ENCODE measurements at regions of chr16 and their contacts with region 1.

Region 1: GRCh38 chr16:28218104-28218503 is 6.3 kb upstream of the XPO6 start:
- DNase-seq: peak in 8 of 9 donors; percentile 41 to 82 (median 72)
- ATAC-seq: peak; percentile 99
- H3K4me3 ChIP-seq: no peak overlapping the region
- H3K4me3 Mint-ChIP-seq: no peak overlapping the region
- H3K27ac ChIP-seq: no peak overlapping the region
- H3K27ac Mint-ChIP-seq: peak overlapping the region in 8 of 9 donors; percentile 13 to 84 (median 66)
- H3K4me1 ChIP-seq: peaks cover 0 to 5% of the 10 kb centered on the region in 2 donors
- H3K4me1 Mint-ChIP-seq: peaks cover 0 to 9% (median 6%) of the 10 kb centered on the region in 7 donors
- H3K27me3 ChIP-seq: no peaks in the 10 kb centered on the region
- H3K27me3 Mint-ChIP-seq: no peaks in the 10 kb centered on the region

Region 2: GRCh38 chr16:28011971-28012445 is 206.1 kb before region 1 on chr16:
- CTCF ChIA-PET with region 1: no interaction called
- POLR2A ChIA-PET with region 1: no interaction called
- intact Hi-C with region 1: no loop called
- DNase-seq: no peak
- ATAC-seq: no peak
- H3K4me3 ChIP-seq: no peak overlapping the region
- H3K4me3 Mint-ChIP-seq: no peak overlapping the region
- H3K27ac ChIP-seq: no peak overlapping the region
- H3K27ac Mint-ChIP-seq: peak overlapping the region in 1 of 9 donors; percentile 18
- H3K4me1 ChIP-seq: no peaks in the 10 kb centered on the region
- H3K4me1 Mint-ChIP-seq: peaks cover 0 to 6% (median 0%) of the 10 kb centered on the region in 7 donors
- H3K27me3 ChIP-seq: no peaks in the 10 kb centered on the region
- H3K27me3 Mint-ChIP-seq: peaks cover 4 to 27% (median 17%) of the 10 kb centered on the region in 5 donors

Region 3: DNA sequence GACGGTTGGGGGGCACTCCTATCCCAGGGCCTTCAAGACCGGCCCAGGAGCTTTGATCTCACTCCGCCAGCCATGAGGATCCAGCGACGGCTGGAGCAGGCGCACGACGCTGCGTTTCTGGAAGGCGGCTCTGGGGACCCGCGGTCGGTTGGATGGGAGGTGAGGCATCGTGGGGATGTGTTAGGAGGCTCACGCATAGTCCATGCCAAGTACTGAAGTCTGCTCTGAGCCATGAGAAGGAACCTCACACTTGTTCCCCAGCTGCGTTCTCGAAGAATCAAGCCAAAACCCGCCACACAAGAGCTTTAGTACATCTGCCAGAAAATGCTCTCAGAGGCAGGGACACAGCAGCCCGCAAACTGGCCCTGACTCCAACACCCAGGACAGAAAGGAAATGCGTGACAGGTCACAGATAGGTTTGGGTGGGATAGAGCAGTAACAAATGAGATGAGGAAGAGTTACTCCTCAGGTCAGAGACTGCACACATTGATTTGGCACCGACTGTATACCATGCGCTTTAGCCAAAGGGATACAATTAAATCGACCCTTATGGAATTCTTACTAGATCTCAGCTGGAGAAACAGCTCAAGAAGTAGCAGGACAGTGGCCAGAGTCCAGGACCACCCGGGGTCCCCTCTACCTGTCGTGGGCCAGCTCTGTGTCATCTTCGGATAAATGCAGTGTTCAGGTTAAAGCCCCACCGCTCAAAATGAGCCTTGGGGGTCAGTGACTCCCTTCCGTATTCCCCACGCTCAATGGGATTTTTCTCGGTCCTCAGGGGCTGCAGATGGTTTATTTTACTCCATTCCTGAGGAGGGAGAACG is 147.9 kb before region 1 on chr16:
- CTCF ChIA-PET with region 1: interaction called, 5 read pairs
- POLR2A ChIA-PET with region 1: no interaction called
- intact Hi-C with region 1: loop called in 1 of 2 experiments (anchors 1 kb)
- DNase-seq: no peak
- ATAC-seq: no peak
- H3K4me3 ChIP-seq: no peak overlapping the region
- H3K4me3 Mint-ChIP-seq: no peak overlapping the region
- H3K27ac ChIP-seq: no peak overlapping the region
- H3K27ac Mint-ChIP-seq: peak overlapping the region in 1 of 9 donors; percentile 25
- H3K4me1 ChIP-seq: no peaks in the 10 kb centered on the region
- H3K4me1 Mint-ChIP-seq: peaks cover 0 to 4% (median 0%) of the 10 kb centered on the region in 7 donors
- H3K27me3 ChIP-seq: no peaks in the 10 kb centered on the region
- H3K27me3 Mint-ChIP-seq: peaks cover 8 to 28% (median 10%) of the 10 kb centered on the region in 5 donors

Region 4: GRCh38 chr16:28087675-28088300 is 130.3 kb before region 1 on chr16:
- CTCF ChIA-PET with region 1: interaction called, 6 read pairs
- POLR2A ChIA-PET with region 1: interaction called, 5 read pairs
- intact Hi-C with region 1: loop called in 1 of 2 experiments (anchors 5 kb)
- DNase-seq: no peak
- ATAC-seq: no peak
- H3K4me3 ChIP-seq: no peak overlapping the region
- H3K4me3 Mint-ChIP-seq: no peak overlapping the region
- H3K27ac ChIP-seq: no peak overlapping the region
- H3K27ac Mint-ChIP-seq: peak overlapping the region in 1 of 9 donors; percentile 67
- H3K4me1 ChIP-seq: no peaks in the 10 kb centered on the region
- H3K4me1 Mint-ChIP-seq: peaks cover 0 to 9% (median 0%) of the 10 kb centered on the region in 7 donors
- H3K27me3 ChIP-seq: no peaks in the 10 kb centered on the region
- H3K27me3 Mint-ChIP-seq: no peaks in the 10 kb centered on the region

Region 5: GRCh38 chr16:28131743-28132393 is 86.2 kb before region 1 on chr16:
- CTCF ChIA-PET with region 1: interaction called, 168 read pairs
- POLR2A ChIA-PET with region 1: interaction called, 45 read pairs
- intact Hi-C with region 1: loop called (anchors 1 kb)
- DNase-seq: no peak
- ATAC-seq: no peak
- H3K4me3 ChIP-seq: no peak overlapping the region
- H3K4me3 Mint-ChIP-seq: no peak overlapping the region
- H3K27ac ChIP-seq: no peak overlapping the region
- H3K27ac Mint-ChIP-seq: peak overlapping the region in 5 of 9 donors; percentile 31 to 86 (median 68)
- H3K4me1 ChIP-seq: peaks cover 6 to 13% of the 10 kb centered on the region in 2 donors
- H3K4me1 Mint-ChIP-seq: peaks cover 16 to 49% (median 36%) of the 10 kb centered on the region in 7 donors
- H3K27me3 ChIP-seq: no peaks in the 10 kb centered on the region
- H3K27me3 Mint-ChIP-seq: no peaks in the 10 kb centered on the region

Region 6: DNA sequence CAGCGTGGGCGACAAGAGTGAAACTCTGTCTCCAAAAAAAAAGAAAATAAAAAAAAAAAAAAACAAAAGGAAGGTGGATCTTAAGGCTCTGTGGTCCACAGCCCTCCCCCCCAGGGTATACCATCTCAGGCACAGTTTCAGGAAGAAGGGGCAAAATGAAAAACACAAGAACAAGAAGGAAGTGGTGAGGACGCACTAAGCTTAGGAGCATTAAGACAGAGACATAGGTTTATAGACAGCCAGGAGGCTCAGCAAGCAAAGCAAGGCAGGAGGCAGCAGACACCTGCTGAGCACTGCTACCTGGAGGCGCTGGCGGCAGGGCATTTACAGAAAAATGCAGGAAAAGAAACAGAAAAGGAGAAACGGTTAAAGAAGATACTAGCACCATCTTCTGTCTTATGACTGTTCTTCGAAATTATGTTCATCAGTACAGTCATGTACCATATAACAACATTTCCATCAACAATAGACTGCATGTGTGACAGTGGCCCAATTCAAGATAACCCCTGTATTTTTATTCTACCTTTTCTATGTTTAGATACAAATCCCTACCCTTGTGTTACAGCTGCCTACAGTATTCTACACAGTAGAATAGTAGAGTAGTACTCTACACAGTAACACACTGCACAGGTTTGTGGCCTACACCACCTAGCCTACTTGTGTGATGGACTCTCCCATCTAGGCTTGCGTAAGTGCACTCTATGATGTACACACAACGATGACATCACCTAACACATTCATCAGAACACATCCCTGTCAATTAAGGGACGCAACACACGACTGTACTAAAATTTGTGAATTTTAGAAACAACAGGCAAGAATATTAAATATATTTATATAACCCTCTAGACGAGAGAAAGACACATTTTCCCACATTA is 68.9 kb before region 1 on chr16:
- CTCF ChIA-PET with region 1: interaction called, 8 read pairs
- POLR2A ChIA-PET with region 1: interaction called, 92 read pairs
- intact Hi-C with region 1: loop called in 1 of 2 experiments (anchors 1 kb)
- DNase-seq: peak in 7 of 9 donors; percentile 49 to 79 (median 73)
- ATAC-seq: peak; percentile 86
- H3K4me3 ChIP-seq: no peak overlapping the region
- H3K4me3 Mint-ChIP-seq: peak overlapping the region; percentile 49 to 81 (median 69)
- H3K27ac ChIP-seq: peak overlapping the region; percentile 61
- H3K27ac Mint-ChIP-seq: peak overlapping the region; percentile 86 to 99 (median 94)
- H3K4me1 ChIP-seq: peaks cover 32 to 66% of the 10 kb centered on the region in 2 donors
- H3K4me1 Mint-ChIP-seq: peaks cover 47 to 97% (median 88%) of the 10 kb centered on the region in 7 donors
- H3K27me3 ChIP-seq: no peaks in the 10 kb centered on the region
- H3K27me3 Mint-ChIP-seq: no peaks in the 10 kb centered on the region

Region 7: GRCh38 chr16:28193530-28194423 is 24.3 kb before region 1 on chr16:
- CTCF ChIA-PET with region 1: interaction called, 11 read pairs
- POLR2A ChIA-PET with region 1: no interaction called
- intact Hi-C with region 1: no loop called
- DNase-seq: peak in 2 of 9 donors; percentile 45 to 55
- ATAC-seq: peak; percentile 24
- H3K4me3 ChIP-seq: peak overlapping the region; percentile 39
- H3K4me3 Mint-ChIP-seq: peak overlapping the region; percentile 73 to 87 (median 86)
- H3K27ac ChIP-seq: peak overlapping the region; percentile 77
- H3K27ac Mint-ChIP-seq: peak overlapping the region; percentile 86 to 99 (median 95)
- H3K4me1 ChIP-seq: peaks cover 43 to 75% of the 10 kb centered on the region in 2 donors
- H3K4me1 Mint-ChIP-seq: peaks cover 65 to 94% (median 84%) of the 10 kb centered on the region in 7 donors
- H3K27me3 ChIP-seq: no peaks in the 10 kb centered on the region
- H3K27me3 Mint-ChIP-seq: no peaks in the 10 kb centered on the region